ENCODE measurements at regions of chr5 and their contacts with region 1.

Region 1: GRCh38 chr5:173907686-173908371 is 19.7 kb downstream of the CPEB4 start:
- DNase-seq: no peak
- ATAC-seq: peak in 6 of 8 donors; percentile 38 to 68 (median 54)
- H3K4me3 ChIP-seq: peak overlapping the region in 1 of 10 donors; percentile 6
- H3K27ac ChIP-seq: peak overlapping the region in 8 of 10 donors; percentile 3 to 81 (median 69)
- H3K4me1 ChIP-seq: peaks cover 3 to 98% (median 78%) of the 10 kb centered on the region in 9 donors
- H3K27me3 ChIP-seq: no peaks in the 10 kb centered on the region
- CTCF ChIP-seq: no peak

Region 2: GRCh38 chr5:173868076-173868880 is 39.6 kb before region 1 on chr5:
- intact Hi-C with region 1: no loop called
- DNase-seq: no peak
- ATAC-seq: no peak
- H3K4me3 ChIP-seq: no peak overlapping the region
- H3K27ac ChIP-seq: peak overlapping the region in 1 of 10 donors; percentile 8
- H3K4me1 ChIP-seq: peaks cover 0 to 66% (median 7%) of the 10 kb centered on the region in 9 donors
- H3K27me3 ChIP-seq: no peaks in the 10 kb centered on the region
- CTCF ChIP-seq: no peak

Region 3: GRCh38 chr5:173954671-173955521 is 47.1 kb after region 1 on chr5:
- intact Hi-C with region 1: loop called in 1 of 10 experiments (anchors 10 kb)
- DNase-seq: peak in 1 of 2 donors; percentile 21
- ATAC-seq: peak; percentile 74 to 93 (median 90)
- H3K4me3 ChIP-seq: no peak overlapping the region
- H3K27ac ChIP-seq: peak overlapping the region; percentile 60 to 86 (median 76)
- H3K4me1 ChIP-seq: peaks cover 0 to 64% (median 22%) of the 10 kb centered on the region in 9 donors
- H3K27me3 ChIP-seq: no peaks in the 10 kb centered on the region
- CTCF ChIP-seq: no peak